ENCODE measurements at regions of chr11 and their contacts with region 1.

Region 1: GRCh38 chr11:6682936-6683861 is at the start of gene MRPL17:
- DNase-seq: peak; percentile 98 to 100 (median 99)
- ATAC-seq: peak; percentile 96 to 99 (median 98)
- H3K4me3 ChIP-seq: peak within 1 kb of the TSS; percentile 48 to 82 (median 54)
- H3K27ac ChIP-seq: peak within 1 kb of the TSS; percentile 60 to 92 (median 79)
- H3K4me1 ChIP-seq: peaks cover 5 to 15% (median 11%) of the 10 kb centered on the region in 3 donors
- H3K27me3 ChIP-seq: no peaks in the 10 kb centered on the region
- CTCF ChIP-seq: peak; percentile 78 to 92 (median 84)
- total RNA-seq, gene MRPL17: 10.6 to 24.5 (median 19.8) TPM

Region 2: DNA sequence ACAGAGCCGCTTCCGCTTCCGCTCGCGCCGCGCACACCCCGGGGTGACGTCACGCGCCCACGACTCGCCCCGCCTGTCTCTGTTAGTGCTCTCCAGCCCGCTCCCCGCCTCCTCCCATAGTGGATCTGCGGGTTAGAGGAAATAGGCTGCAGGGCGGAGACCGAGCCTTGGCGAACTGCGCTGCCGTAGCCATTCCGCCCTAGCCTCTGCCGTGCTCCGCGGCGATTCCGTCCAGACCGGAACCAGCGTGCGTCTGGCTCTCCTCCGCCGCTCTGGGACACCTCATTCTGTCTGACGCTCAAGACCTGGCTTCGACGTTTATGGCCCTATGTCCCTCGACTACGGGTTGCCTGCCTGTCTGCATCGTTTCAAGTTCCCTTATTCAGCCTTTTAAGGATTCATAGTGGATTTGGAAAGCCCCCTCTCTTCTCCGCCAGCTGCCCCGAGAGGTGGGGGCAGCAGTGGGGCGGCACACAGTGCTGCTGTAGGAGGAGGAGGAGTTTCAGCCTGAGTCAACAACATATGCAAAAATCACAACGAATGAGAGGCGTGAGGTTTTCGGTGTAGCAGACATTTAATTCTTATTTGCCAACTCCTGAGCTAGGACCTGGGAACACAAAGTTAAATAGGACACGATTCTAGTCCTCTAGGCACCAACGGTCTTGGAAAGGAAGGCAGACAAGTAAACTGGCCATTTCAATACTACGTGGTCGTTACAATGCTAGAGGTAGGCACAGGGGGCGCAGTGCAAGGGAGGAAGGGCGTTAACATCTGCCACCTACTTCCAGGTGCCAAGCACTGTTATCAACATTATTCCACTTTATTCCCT is 70.8 kb before region 1 on chr11 and contains the start of gene TAF10:
- intact Hi-C with region 1: loop called in 1 of 3 experiments (anchors 10 kb)
- DNase-seq: peak; percentile 97 to 98 (median 98)
- ATAC-seq: peak; percentile 92 to 97 (median 94)
- H3K4me3 ChIP-seq: peak within 1 kb of the TSS; percentile 52 to 83 (median 77)
- H3K27ac ChIP-seq: peak within 1 kb of the TSS; percentile 89 to 100 (median 97)
- H3K4me1 ChIP-seq: peaks cover 7 to 22% (median 15%) of the 10 kb centered on the region in 3 donors
- H3K27me3 ChIP-seq: no peaks in the 10 kb centered on the region
- CTCF ChIP-seq: peak in 2 of 4 donors; percentile 14 to 32
- total RNA-seq, gene TAF10: 53.5 to 96.7 (median 75.6) TPM

Measured in pancreas (tissue), 10 donors.